ENCODE measurements at regions of chr7 and their contacts with region 1.

Region 1: GRCh38 chr7:65006094-65006992 is at the start of gene ERV3-1:
- DNase-seq: peak; percentile 85 to 96 (median 91)
- H3K4me3 ChIP-seq: peak within 1 kb of the TSS; percentile 95
- H3K4me3 Mint-ChIP-seq: peak within 1 kb of the TSS; percentile 92 to 99 (median 96)
- H3K27ac ChIP-seq: peak within 1 kb of the TSS; percentile 85
- H3K27ac Mint-ChIP-seq: peak within 1 kb of the TSS; percentile 80 to 98 (median 96)
- H3K4me1 ChIP-seq: peaks cover 24% of the 10 kb centered on the region
- H3K4me1 Mint-ChIP-seq: peaks cover 48 to 57% (median 53%) of the 10 kb centered on the region in 3 donors
- H3K27me3 ChIP-seq: no peaks in the 10 kb centered on the region
- H3K27me3 Mint-ChIP-seq: peaks cover 0 to 1% of the 10 kb centered on the region in 2 donors
- total RNA-seq, gene ERV3-1: 6.0 to 7.1 TPM

Region 2: GRCh38 chr7:64902806-64903721 is 103.3 kb before region 1 on chr7 and contains the start of gene ZNF273:
- CTCF ChIA-PET with region 1: no interaction called
- POLR2A ChIA-PET with region 1: interaction called, 12 read pairs
- DNase-seq: peak; percentile 84 to 94 (median 87)
- H3K4me3 ChIP-seq: peak within 1 kb of the TSS; percentile 99
- H3K4me3 Mint-ChIP-seq: peak within 1 kb of the TSS; percentile 95 to 99 (median 98)
- H3K27ac ChIP-seq: peak within 1 kb of the TSS; percentile 92
- H3K27ac Mint-ChIP-seq: peak within 1 kb of the TSS; percentile 88 to 97 (median 96)
- H3K4me1 ChIP-seq: peaks cover 26% of the 10 kb centered on the region
- H3K4me1 Mint-ChIP-seq: peaks cover 38 to 55% (median 53%) of the 10 kb centered on the region in 3 donors
- H3K27me3 ChIP-seq: no peaks in the 10 kb centered on the region
- H3K27me3 Mint-ChIP-seq: no peaks in the 10 kb centered on the region
- total RNA-seq, gene ZNF273: 6.8 to 7.1 TPM

Region 3: DNA sequence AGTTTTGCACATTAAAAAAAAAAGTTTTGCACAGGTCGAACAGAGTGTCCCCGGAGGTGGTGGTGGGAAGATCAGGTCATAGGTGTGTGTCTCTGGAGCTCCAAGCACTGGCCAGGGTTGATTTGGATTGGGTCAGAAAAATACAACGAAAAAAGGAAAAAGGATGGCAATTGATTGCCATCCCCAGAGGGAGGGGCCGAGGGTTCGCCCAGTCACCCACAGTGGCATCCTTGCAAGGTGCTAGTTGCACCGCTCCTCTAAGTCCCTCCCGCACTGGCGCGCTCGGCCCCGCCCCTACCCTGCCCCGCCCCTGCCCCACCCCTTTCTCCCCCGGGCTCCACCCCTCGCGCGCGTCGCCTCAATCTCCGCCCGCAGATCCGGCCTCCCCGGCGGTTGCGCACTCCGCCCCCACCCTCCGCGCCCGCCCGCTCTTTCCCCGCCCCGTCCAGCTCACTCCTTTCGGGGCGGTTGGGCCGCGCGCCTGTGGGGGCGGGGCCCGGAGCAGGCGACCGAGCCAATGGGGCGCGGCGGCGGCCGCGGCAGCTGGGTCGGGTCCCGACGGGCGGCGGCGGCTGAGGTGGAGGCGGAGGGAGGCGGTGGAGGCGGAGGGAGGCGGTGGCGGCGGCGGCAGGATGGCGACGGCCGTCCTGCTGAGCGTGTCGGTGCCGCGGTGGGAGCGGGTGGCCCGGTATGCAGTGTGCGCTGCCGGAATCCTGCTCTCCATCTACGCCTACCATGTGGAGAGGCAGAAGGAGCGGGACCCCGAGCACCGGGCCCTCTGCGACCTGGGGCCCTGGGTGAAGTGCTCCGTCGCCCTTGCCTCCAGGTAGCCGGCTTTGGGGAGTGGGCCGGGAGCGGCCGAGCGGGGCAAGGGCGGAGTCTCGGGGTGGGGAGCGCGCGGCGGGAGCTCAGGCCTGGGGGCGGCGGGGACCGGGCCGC is 31.7 kb after region 1 on chr7:
- CTCF ChIA-PET with region 1: no interaction called
- POLR2A ChIA-PET with region 1: interaction called, 25 read pairs
- DNase-seq: peak; percentile 88 to 95 (median 92)
- H3K4me3 ChIP-seq: no peak overlapping the region
- H3K4me3 Mint-ChIP-seq: peak overlapping the region; percentile 64 to 91 (median 80)
- H3K27ac ChIP-seq: peak overlapping the region; percentile 51
- H3K27ac Mint-ChIP-seq: peak overlapping the region; percentile 38 to 90 (median 87)
- H3K4me1 ChIP-seq: peaks cover 11% of the 10 kb centered on the region
- H3K4me1 Mint-ChIP-seq: peaks cover 12 to 19% (median 17%) of the 10 kb centered on the region in 3 donors
- H3K27me3 ChIP-seq: no peaks in the 10 kb centered on the region
- H3K27me3 Mint-ChIP-seq: peaks cover 0 to 2% of the 10 kb centered on the region in 2 donors

Region 4: GRCh38 chr7:65373608-65374351 is 367.4 kb after region 1 on chr7 and contains the start of gene ZNF92:
- CTCF ChIA-PET with region 1: no interaction called
- POLR2A ChIA-PET with region 1: interaction called, 10 read pairs
- DNase-seq: peak; percentile 91 to 97 (median 94)
- H3K4me3 ChIP-seq: peak within 1 kb of the TSS; percentile 82
- H3K4me3 Mint-ChIP-seq: peak within 1 kb of the TSS; percentile 94 to 100 (median 98)
- H3K27ac ChIP-seq: peak within 1 kb of the TSS; percentile 90
- H3K27ac Mint-ChIP-seq: peak within 1 kb of the TSS; percentile 88 to 99 (median 94)
- H3K4me1 ChIP-seq: peaks cover 31% of the 10 kb centered on the region
- H3K4me1 Mint-ChIP-seq: peaks cover 46 to 54% (median 53%) of the 10 kb centered on the region in 3 donors
- H3K27me3 ChIP-seq: no peaks in the 10 kb centered on the region
- H3K27me3 Mint-ChIP-seq: no peaks in the 10 kb centered on the region
- total RNA-seq, gene ZNF92: 13.4 to 14.2 TPM

Region 5: DNA sequence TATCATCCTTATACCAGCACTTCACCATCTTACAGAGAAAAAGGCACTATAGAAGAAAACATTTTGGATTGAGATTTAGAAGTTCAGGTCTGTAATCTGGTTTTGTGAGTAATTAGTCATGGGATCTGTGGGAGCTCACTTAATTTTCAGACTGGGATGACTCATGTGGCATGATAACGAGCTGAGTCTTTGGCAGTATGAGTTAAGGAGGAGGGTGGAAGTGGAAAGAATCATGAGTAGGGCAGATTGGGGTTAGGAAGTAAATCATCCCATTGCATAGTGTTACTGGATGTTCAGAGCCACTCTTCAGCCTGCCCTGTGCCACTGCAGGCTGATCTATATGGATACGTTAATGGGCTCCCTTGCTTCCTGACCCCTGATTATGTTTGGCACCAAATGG is 432.3 kb after region 1 on chr7:
- CTCF ChIA-PET with region 1: no interaction called
- POLR2A ChIA-PET with region 1: no interaction called
- DNase-seq: no peak
- H3K4me3 ChIP-seq: no peak overlapping the region
- H3K4me3 Mint-ChIP-seq: no peak overlapping the region
- H3K27ac ChIP-seq: no peak overlapping the region
- H3K27ac Mint-ChIP-seq: no peak overlapping the region
- H3K4me1 ChIP-seq: no peaks in the 10 kb centered on the region
- H3K4me1 Mint-ChIP-seq: peaks cover 0 to 1% (median under 1%) of the 10 kb centered on the region in 3 donors
- H3K27me3 ChIP-seq: no peaks in the 10 kb centered on the region
- H3K27me3 Mint-ChIP-seq: no peaks in the 10 kb centered on the region

Measured in CD8-positive, alpha-beta memory T cell (primary cell).